ENCODE measurements at regions of chr10 and their contacts with region 1.

Region 1: GRCh38 chr10:47384148-47384921 is at the start of gene ZNF488:
- DNase-seq: peak; percentile 80 to 91
- H3K4me3 ChIP-seq: peak within 1 kb of the TSS; percentile 67 to 91 (median 74)
- H3K27ac ChIP-seq: peak within 1 kb of the TSS; percentile 52; the same call in 1 of the 2 replicates
- H3K4me1 ChIP-seq: peaks cover 0 to 8% (median 4%) of the 10 kb centered on the region in 4 experiments; a peak in 4 of 7 replicates
- H3K27me3 ChIP-seq: peaks cover 0 to 2% (median 1%) of the 10 kb centered on the region in 4 experiments; a peak in 1 of 7 replicates
- CTCF ChIP-seq: no peak
- EP300 ChIP-seq: no peak
- POLR2A ChIP-seq: peak; percentile 58 to 79
- RAD21 ChIP-seq: no peak
- total RNA-seq, gene ZNF488: 7.7 and 7.9 TPM in 2 replicates

Region 2: GRCh38 chr10:46284293-46285229 is 1099.8 kb before region 1 on chr10:
- CTCF ChIA-PET with region 1: interaction called, 10 read pairs
- POLR2A ChIA-PET with region 1: interaction called, 18 read pairs
- DNase-seq: peak; percentile 76 to 92
- H3K4me3 ChIP-seq: peak overlapping the region; percentile 60 to 86 (median 72)
- H3K27ac ChIP-seq: no peak overlapping the region
- H3K4me1 ChIP-seq: peaks cover 0 to 6% (median under 1%) of the 10 kb centered on the region in 4 experiments; a peak in 5 of 7 replicates
- H3K27me3 ChIP-seq: peaks cover 16 to 39% (median 37%) of the 10 kb centered on the region in 4 experiments
- CTCF ChIP-seq: no peak
- EP300 ChIP-seq: no peak; a peak in 1 of 3 replicates
- POLR2A ChIP-seq: peak in 1 of 2 experiments; percentile 47; a peak in 1 of 3 replicates
- RAD21 ChIP-seq: no peak

Region 3: DNA sequence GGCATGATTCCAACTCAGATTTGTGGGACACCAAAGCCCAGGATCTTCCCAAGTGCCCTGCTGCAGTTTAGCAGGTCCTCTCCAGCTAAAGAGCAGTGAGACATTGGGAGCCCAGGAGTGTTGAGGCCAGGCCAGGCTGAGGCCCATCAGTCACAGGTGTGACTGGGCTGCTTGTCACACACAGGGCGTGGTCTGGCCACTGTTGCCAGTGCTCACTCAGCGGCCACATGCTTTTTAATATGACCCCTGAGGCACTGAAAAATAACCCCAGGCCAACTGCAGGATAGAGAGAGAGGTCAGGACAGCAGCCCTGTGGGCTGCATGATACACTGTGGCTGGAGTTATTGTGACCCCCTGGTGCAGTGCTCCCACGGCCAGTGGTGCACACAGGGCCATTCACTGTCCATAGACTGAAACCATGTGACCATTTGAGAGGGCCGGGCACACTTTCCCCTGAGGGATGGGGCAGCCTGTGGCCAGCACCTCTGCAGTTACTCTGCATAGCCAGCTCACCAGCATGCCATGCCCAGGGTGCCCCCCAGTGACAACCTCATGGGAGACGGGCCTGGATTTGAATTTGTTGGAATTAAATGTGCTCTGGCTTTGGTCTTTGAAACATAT is 57.9 kb before region 1 on chr10:
- CTCF ChIA-PET with region 1: no interaction called
- POLR2A ChIA-PET with region 1: no interaction called
- DNase-seq: no peak
- H3K4me3 ChIP-seq: no peak overlapping the region
- H3K27ac ChIP-seq: no peak overlapping the region
- H3K4me1 ChIP-seq: no peaks in the 10 kb centered on the region
- H3K27me3 ChIP-seq: no peaks in the 10 kb centered on the region; a peak in 2 of 7 replicates
- CTCF ChIP-seq: no peak
- EP300 ChIP-seq: no peak
- POLR2A ChIP-seq: no peak
- RAD21 ChIP-seq: no peak

Region 4: GRCh38 chr10:47402641-47403301 is 18.4 kb after region 1 on chr10:
- CTCF ChIA-PET with region 1: interaction called, 4 read pairs
- POLR2A ChIA-PET with region 1: interaction called, 13 read pairs
- DNase-seq: peak; percentile 51 to 68
- H3K4me3 ChIP-seq: no peak overlapping the region
- H3K27ac ChIP-seq: 0 out of 2 replicates have a peak overlapping the region, but pooled peaks have one; percentile 32
- H3K4me1 ChIP-seq: peaks cover 7 to 27% (median 20%) of the 10 kb centered on the region in 4 experiments
- H3K27me3 ChIP-seq: no peaks in the 10 kb centered on the region; a peak in 1 of 7 replicates
- CTCF ChIP-seq: no peak
- EP300 ChIP-seq: no peak
- POLR2A ChIP-seq: no peak
- RAD21 ChIP-seq: no peak

Measured in H1 (cell line).